Natural killer cell (primary cell): ENCODE measurements at regions of chr13 and their contacts with region 1.

Region 1: DNA sequence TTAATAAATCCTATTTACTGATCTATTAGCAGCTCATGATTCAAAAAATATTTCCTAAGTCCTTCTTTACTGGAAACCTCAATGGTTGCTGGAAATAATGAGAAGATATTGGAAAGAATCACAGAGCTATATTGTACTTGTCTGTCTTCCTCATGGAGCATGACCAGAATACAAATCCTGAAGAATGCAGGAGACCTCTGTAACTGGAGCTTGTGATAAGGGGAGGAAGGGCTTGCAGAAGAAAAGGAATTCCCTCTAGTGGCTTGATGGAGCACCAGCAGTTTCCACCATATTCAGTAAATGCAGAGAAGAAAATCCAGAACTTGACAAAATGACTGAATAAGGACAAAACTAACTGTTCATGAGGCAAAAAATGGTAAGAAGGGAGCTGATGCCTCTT is 1333.1 kb downstream of the EFNB2 start:
- DNase-seq: peak in 1 of 2 donors; percentile 9
- ATAC-seq: peak in 1 of 3 donors; percentile 42
- H3K4me3 ChIP-seq: no peak overlapping the region
- H3K4me3 Mint-ChIP-seq: no peak overlapping the region
- H3K27ac ChIP-seq: no peak overlapping the region
- H3K27ac Mint-ChIP-seq: no peak overlapping the region
- H3K4me1 ChIP-seq: no peaks in the 10 kb centered on the region
- H3K4me1 Mint-ChIP-seq: no peaks in the 10 kb centered on the region
- H3K27me3 ChIP-seq: no peaks in the 10 kb centered on the region
- H3K27me3 Mint-ChIP-seq: no peaks in the 10 kb centered on the region
- CTCF ChIP-seq: peak; percentile 17

Region 2: DNA sequence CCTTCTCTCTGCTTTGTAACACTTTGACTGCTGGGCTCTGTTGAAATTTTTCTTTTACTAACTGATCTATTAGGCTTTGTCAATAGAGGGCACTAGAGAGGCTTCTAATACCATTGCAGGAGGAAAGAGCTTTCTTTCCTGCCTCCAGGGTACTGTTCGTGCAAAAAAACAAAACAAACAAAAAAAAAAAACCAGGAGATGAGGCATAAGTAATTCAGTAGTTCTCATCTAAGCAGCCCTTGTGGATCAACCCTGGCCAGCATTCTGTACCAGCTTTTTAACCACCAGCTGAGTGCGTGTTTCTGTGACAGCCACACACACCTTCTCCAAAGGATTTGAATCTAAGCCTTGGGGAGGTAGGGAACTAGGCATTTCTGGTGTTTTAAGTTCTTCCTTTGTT is 428.6 kb before region 1 on chr13:
- intact Hi-C with region 1: loop called (anchors 1 kb)
- DNase-seq: peak in 1 of 2 donors; percentile 37
- ATAC-seq: peak in 2 of 3 donors; percentile 64 to 74
- H3K4me3 ChIP-seq: no peak overlapping the region
- H3K4me3 Mint-ChIP-seq: no peak overlapping the region
- H3K27ac ChIP-seq: no peak overlapping the region
- H3K27ac Mint-ChIP-seq: peak overlapping the region in 1 of 2 donors; percentile 13
- H3K4me1 ChIP-seq: no peaks in the 10 kb centered on the region
- H3K4me1 Mint-ChIP-seq: peaks cover 6 to 14% of the 10 kb centered on the region in 2 donors
- H3K27me3 ChIP-seq: no peaks in the 10 kb centered on the region
- H3K27me3 Mint-ChIP-seq: no peaks in the 10 kb centered on the region
- CTCF ChIP-seq: peak; percentile 74

Region 3: DNA sequence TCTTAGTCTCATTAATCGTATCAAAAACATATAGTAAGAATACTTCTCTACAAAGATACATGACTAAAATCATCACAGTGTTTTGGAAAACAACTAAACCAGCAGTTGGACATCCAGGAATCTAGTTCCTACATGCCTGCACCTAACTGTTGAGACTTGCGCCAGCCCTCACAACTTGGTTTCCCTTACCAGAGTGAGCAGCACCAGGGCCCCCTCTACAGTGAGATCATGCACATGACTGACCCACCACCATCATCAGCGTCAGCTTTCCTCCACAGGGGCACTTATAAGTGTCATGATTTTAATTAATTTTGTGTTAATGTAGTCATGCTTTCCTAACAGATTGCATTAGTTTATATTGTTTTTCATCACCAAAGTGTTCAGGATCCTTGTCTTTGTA is 11.2 kb after region 1 on chr13:
- intact Hi-C with region 1: no loop called
- DNase-seq: no peak
- ATAC-seq: no peak
- H3K4me3 ChIP-seq: no peak overlapping the region
- H3K4me3 Mint-ChIP-seq: no peak overlapping the region
- H3K27ac ChIP-seq: no peak overlapping the region
- H3K27ac Mint-ChIP-seq: no peak overlapping the region
- H3K4me1 ChIP-seq: no peaks in the 10 kb centered on the region
- H3K4me1 Mint-ChIP-seq: no peaks in the 10 kb centered on the region
- H3K27me3 ChIP-seq: no peaks in the 10 kb centered on the region
- H3K27me3 Mint-ChIP-seq: no peaks in the 10 kb centered on the region
- CTCF ChIP-seq: no peak

Region 4: DNA sequence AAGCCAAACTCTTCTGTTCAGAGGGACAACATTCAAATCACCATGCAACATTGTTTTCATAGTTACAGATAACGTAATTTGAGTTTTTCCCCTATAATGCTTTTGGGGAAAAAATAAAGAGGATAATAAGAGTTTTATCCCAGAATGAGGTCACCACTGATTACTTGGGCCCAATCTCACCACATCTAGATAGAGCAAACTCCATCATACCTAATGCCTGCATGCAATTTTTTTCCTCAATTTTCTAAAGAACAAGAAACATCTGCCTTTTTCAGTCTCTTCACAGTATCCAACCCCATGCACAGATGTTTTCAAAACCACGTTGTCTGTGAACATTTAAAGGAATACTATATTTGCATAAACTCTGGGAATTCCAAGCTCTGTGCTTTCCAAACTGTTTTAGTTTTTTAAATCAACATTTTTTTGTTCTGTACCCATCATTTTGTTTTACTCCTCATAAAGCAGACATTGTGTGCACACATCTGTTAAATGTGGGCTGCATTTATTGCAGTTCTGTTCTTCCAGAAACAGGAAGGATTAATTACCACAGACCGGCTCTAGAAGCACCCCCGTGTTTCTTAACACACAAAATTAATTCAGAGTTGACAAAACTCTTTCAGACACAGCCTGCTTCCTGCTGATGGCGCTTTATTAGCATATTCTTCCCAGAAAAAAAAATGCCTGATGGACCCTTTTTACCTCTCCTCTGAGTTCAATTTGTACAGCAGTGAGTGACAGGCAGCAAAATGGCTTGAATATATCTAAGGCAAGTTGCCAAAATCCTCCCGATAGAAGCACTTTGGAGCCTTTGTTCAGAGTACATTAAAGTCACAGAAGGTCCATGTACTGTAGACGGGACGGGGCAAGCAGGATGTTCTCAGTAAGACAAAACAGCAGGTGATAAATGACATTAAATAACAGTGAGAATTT is 161.2 kb after region 1 on chr13:
- intact Hi-C with region 1: no loop called
- DNase-seq: no peak
- ATAC-seq: peak in 1 of 3 donors; percentile 55
- H3K4me3 ChIP-seq: no peak overlapping the region
- H3K4me3 Mint-ChIP-seq: peak overlapping the region; percentile 29
- H3K27ac ChIP-seq: no peak overlapping the region
- H3K27ac Mint-ChIP-seq: no peak overlapping the region
- H3K4me1 ChIP-seq: no peaks in the 10 kb centered on the region
- H3K4me1 Mint-ChIP-seq: peaks cover 0 to 10% of the 10 kb centered on the region in 2 donors
- H3K27me3 ChIP-seq: no peaks in the 10 kb centered on the region
- H3K27me3 Mint-ChIP-seq: peaks cover 0 to 8% of the 10 kb centered on the region in 2 donors
- CTCF ChIP-seq: no peak